PC-9 (cell line): ENCODE measurements at regions of chr17 and their contacts with region 1.

Region 1: DNA sequence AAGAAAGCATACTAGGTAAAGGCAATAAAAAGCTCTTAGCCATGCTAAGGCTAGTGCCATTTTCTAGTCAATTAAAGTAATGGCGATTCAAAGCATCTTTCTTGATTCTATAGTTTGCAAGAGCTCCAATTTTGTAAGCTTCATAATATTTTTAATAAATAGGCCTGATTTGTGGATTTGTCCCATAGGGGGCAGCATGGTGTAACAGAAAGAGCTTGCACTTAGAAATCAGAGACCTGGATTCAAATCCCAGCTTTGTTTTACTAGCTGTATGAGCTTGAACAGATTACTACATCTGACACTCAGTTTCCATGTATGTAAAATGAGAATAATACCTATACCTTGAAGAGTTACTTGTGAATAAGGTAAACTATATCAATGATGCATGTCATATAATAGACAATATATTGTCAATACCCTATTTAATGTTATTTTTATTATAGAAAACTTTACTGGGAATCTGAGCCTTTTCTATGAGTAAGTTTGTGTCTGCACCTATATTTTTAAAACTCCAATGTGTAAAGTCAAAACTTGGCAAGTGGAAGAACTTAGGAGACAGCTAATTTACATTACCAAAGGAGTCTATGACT is 93.6 kb upstream of the NOG start:
- DNase-seq: peak; percentile 8 to 41
- H3K4me3 ChIP-seq: no peak overlapping the region
- H3K27ac ChIP-seq: no peak overlapping the region
- H3K4me1 ChIP-seq: no peaks in the 10 kb centered on the region
- H3K27me3 ChIP-seq: no peaks in the 10 kb centered on the region
- CTCF ChIP-seq: peak; percentile 82

Region 2: DNA sequence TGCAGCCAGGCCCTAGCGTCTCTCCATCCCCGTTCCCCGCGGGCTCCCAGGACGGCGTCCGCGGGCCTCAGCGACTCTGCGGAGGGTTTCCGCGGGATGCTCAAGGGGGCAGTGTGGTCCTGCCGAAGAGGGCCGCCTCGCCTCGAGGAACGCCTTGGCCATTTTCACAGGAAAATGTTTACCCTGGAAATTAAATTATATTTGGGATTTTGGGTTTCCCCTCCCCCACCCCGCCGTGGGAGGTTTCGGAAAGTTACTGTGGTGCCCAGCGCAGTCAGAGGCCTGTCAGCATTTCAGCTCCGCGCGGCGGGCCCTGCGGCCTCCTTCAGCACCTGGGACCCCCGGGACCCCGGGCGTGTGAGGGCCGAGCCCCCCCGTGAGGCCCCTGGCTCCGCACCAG is 654.5 kb before region 1 on chr17:
- CTCF ChIA-PET with region 1: no interaction called
- POLR2A ChIA-PET with region 1: no interaction called
- intact Hi-C with region 1: no loop called
- DNase-seq: no peak
- H3K4me3 ChIP-seq: no peak overlapping the region
- H3K27ac ChIP-seq: no peak overlapping the region
- H3K4me1 ChIP-seq: no peaks in the 10 kb centered on the region
- H3K27me3 ChIP-seq: peaks cover 39% of the 10 kb centered on the region; the same call in 1 of the 2 replicates
- CTCF ChIP-seq: no peak

Region 3: DNA sequence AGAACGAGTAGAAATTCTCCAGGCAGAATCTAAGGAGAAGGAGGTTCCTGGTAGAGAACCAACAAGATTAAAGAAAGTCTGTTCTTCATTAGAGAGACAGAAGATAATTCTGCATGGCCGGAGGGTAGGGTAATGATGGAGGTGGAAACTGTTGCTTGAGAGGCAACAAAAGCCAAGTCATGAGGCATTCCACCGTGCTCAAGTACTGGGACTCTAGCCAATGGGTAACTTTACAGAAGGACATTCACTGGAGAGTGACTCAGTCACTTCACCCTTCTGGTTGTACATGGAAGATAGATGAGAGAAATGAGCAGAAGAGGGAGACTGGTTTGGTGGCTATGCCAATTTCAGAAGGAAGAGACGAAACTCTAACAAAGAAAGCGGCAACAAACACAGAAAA is 400.2 kb before region 1 on chr17:
- CTCF ChIA-PET with region 1: no interaction called
- POLR2A ChIA-PET with region 1: no interaction called
- intact Hi-C with region 1: no loop called
- DNase-seq: no peak
- H3K4me3 ChIP-seq: no peak overlapping the region
- H3K27ac ChIP-seq: no peak overlapping the region
- H3K4me1 ChIP-seq: no peaks in the 10 kb centered on the region
- H3K27me3 ChIP-seq: no peaks in the 10 kb centered on the region
- CTCF ChIP-seq: no peak

Region 4: DNA sequence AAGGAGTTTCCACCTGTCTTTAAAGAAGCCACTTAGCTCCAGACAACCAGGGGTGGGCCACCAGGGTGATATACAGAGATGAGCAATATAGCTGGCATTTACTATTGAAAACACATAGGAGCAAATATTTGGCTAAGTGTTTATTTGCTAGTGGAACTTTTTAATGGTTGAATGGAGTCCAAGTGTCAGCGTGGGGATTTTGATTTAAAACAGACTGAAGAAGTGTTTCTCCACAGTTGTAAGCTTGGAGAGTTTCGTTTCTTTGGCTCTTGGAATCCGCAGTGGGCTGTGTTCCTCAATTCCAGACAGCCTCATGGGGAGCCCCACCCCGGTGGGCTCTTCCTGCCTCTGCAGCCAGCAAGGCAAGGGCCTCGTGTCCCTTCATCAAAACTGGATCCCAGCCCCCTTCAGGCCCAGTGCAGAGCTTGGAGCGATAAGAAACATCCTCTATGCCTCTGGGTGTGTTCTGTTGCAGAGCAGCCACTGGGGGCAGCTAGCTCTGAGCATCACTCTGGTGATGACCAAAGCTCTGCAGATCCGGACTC is 129.7 kb after region 1 on chr17:
- CTCF ChIA-PET with region 1: no interaction called
- POLR2A ChIA-PET with region 1: no interaction called
- intact Hi-C with region 1: no loop called
- DNase-seq: peak in 1 of 2 experiments; percentile 43
- H3K4me3 ChIP-seq: no peak overlapping the region
- H3K27ac ChIP-seq: no peak overlapping the region
- H3K4me1 ChIP-seq: 0 out of 2 replicates have a peak, but pooled peaks cover 4% of the 10 kb centered on the region
- H3K27me3 ChIP-seq: no peaks in the 10 kb centered on the region
- CTCF ChIP-seq: peak; percentile 56

Region 5: DNA sequence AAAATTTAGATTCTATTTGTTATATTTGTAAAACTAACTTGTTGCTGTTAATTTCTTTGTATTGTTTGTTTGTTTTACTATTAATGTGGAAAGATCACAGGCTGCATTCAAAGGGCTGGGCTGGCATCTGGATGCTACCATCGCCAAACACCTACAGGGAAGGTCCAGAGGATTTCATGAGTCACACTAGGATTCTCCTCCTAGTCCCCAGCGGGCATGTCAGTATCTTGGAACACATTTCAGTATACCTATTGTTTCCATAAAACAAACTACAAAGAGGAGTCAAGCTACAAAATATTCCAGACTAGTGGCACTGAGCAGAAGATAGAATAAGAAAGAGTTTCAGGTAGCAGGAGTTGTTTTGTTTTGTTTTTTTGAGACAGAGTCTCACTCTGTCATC is 148.9 kb after region 1 on chr17:
- CTCF ChIA-PET with region 1: no interaction called
- POLR2A ChIA-PET with region 1: no interaction called
- intact Hi-C with region 1: no loop called
- DNase-seq: no peak
- H3K4me3 ChIP-seq: no peak overlapping the region
- H3K27ac ChIP-seq: no peak overlapping the region
- H3K4me1 ChIP-seq: peaks cover 11% of the 10 kb centered on the region
- H3K27me3 ChIP-seq: no peaks in the 10 kb centered on the region
- CTCF ChIP-seq: no peak

Region 6: GRCh38 chr17:56779898-56780733 is 280.2 kb after region 1 on chr17:
- CTCF ChIA-PET with region 1: interaction called, 24 read pairs
- POLR2A ChIA-PET with region 1: no interaction called
- intact Hi-C with region 1: loop called (anchors 5 kb)
- DNase-seq: peak; percentile 64 to 87
- H3K4me3 ChIP-seq: peak overlapping the region; percentile 66
- H3K27ac ChIP-seq: no peak overlapping the region
- H3K4me1 ChIP-seq: peaks cover 30% of the 10 kb centered on the region
- H3K27me3 ChIP-seq: no peaks in the 10 kb centered on the region
- CTCF ChIP-seq: peak; percentile 99